Natural killer cell (primary cell): ENCODE measurements at regions of chr7 and their contacts with region 1.

Region 1: DNA sequence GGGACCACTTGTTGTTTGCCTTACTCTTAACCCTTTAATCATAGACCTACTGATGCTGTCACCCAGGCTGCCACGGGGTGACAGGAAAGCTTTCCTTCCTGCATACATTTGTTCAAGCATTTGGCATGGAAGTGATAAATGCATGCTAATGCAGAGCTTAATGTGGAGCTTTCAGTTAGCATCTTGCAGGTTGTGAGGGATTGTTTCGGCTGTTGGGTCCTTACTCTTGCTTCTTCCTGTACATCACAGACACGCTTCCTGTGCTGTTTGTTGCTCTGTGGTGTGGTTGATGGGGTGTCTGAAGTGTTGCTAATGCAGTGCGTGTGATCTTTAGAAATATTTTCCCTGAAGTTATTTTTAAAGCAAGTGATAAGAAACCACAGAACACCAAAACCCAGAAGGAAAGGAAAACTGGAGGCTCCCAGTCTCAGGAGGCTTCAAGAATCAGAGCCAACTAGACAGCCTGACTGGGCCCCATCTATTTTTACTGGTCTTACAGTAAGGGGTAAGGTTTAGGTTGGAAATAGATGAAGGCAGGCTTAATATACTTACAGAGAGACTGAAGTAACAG is 143.1 kb downstream of the CHN2 start:
- DNase-seq: peak; percentile 40 to 78
- ATAC-seq: peak; percentile 86 to 98 (median 92)
- H3K4me3 ChIP-seq: no peak overlapping the region
- H3K4me3 Mint-ChIP-seq: peak overlapping the region; percentile 72
- H3K27ac ChIP-seq: peak overlapping the region; percentile 46
- H3K27ac Mint-ChIP-seq: peak overlapping the region; percentile 83 to 86
- H3K4me1 ChIP-seq: peaks cover 43% of the 10 kb centered on the region
- H3K4me1 Mint-ChIP-seq: peaks cover 44% of the 10 kb centered on the region in 2 donors
- H3K27me3 ChIP-seq: no peaks in the 10 kb centered on the region
- H3K27me3 Mint-ChIP-seq: no peaks in the 10 kb centered on the region
- CTCF ChIP-seq: no peak

Region 2: DNA sequence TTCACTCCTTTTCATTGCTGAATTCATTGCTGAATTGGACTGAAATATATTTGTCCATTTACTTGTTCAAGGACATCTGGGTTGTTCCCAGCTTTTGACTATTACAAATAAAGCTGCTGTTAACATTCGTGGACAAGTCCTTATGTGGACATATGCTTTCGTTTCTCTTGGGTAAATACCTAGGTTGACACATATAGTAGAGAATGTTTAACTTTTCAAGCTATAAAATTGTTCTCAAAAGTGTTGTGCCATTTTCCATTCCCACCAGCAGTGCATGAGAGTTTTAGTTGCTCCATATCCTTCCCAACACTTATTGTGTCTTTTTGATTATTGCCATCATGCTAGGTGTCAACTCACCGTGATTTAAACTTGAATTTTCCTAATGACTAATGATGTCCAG is 173.8 kb before region 1 on chr7:
- intact Hi-C with region 1: no loop called
- DNase-seq: no peak
- ATAC-seq: no peak
- H3K4me3 ChIP-seq: no peak overlapping the region
- H3K4me3 Mint-ChIP-seq: no peak overlapping the region
- H3K27ac ChIP-seq: no peak overlapping the region
- H3K27ac Mint-ChIP-seq: no peak overlapping the region
- H3K4me1 ChIP-seq: no peaks in the 10 kb centered on the region
- H3K4me1 Mint-ChIP-seq: no peaks in the 10 kb centered on the region
- H3K27me3 ChIP-seq: peaks cover 2% of the 10 kb centered on the region
- H3K27me3 Mint-ChIP-seq: peaks cover 22 to 29% of the 10 kb centered on the region in 2 donors
- CTCF ChIP-seq: no peak

Region 3: GRCh38 chr7:29194594-29195427 is 142.8 kb before region 1 on chr7 and contains the start of gene CHN2:
- intact Hi-C with region 1: loop called (anchors 1 kb)
- DNase-seq: peak; percentile 68 to 75
- ATAC-seq: peak; percentile 61 to 79 (median 66)
- H3K4me3 ChIP-seq: peak within 1 kb of the TSS; percentile 79
- H3K4me3 Mint-ChIP-seq: peak within 1 kb of the TSS; percentile 93
- H3K27ac ChIP-seq: peak within 1 kb of the TSS; percentile 67
- H3K27ac Mint-ChIP-seq: peak within 1 kb of the TSS; percentile 88 to 92
- H3K4me1 ChIP-seq: peaks cover 19% of the 10 kb centered on the region
- H3K4me1 Mint-ChIP-seq: peaks cover 35 to 46% of the 10 kb centered on the region in 2 donors
- H3K27me3 ChIP-seq: no peaks in the 10 kb centered on the region
- H3K27me3 Mint-ChIP-seq: peaks cover 2 to 7% of the 10 kb centered on the region in 2 donors
- CTCF ChIP-seq: no peak
- total RNA-seq, gene CHN2: 23.2 to 40.6 (median 30.2) TPM

Region 4: GRCh38 chr7:29239638-29240037 is 98.0 kb before region 1 on chr7:
- intact Hi-C with region 1: loop called (anchors 5 kb)
- DNase-seq: peak in 1 of 2 donors; percentile 44
- ATAC-seq: no peak
- H3K4me3 ChIP-seq: no peak overlapping the region
- H3K4me3 Mint-ChIP-seq: no peak overlapping the region
- H3K27ac ChIP-seq: no peak overlapping the region
- H3K27ac Mint-ChIP-seq: no peak overlapping the region
- H3K4me1 ChIP-seq: peaks cover 7% of the 10 kb centered on the region
- H3K4me1 Mint-ChIP-seq: peaks cover 27 to 31% of the 10 kb centered on the region in 2 donors
- H3K27me3 ChIP-seq: no peaks in the 10 kb centered on the region
- H3K27me3 Mint-ChIP-seq: no peaks in the 10 kb centered on the region
- CTCF ChIP-seq: peak; percentile 32

Region 5: GRCh38 chr7:29262191-29262917 is 75.3 kb before region 1 on chr7:
- intact Hi-C with region 1: loop called (anchors 2 kb)
- DNase-seq: no peak
- ATAC-seq: peak; percentile 75 to 84 (median 84)
- H3K4me3 ChIP-seq: no peak overlapping the region
- H3K4me3 Mint-ChIP-seq: peak overlapping the region; percentile 52
- H3K27ac ChIP-seq: no peak overlapping the region
- H3K27ac Mint-ChIP-seq: peak overlapping the region; percentile 63 to 68
- H3K4me1 ChIP-seq: peaks cover 13% of the 10 kb centered on the region
- H3K4me1 Mint-ChIP-seq: peaks cover 37 to 39% of the 10 kb centered on the region in 2 donors
- H3K27me3 ChIP-seq: no peaks in the 10 kb centered on the region
- H3K27me3 Mint-ChIP-seq: no peaks in the 10 kb centered on the region
- CTCF ChIP-seq: no peak

Region 6: DNA sequence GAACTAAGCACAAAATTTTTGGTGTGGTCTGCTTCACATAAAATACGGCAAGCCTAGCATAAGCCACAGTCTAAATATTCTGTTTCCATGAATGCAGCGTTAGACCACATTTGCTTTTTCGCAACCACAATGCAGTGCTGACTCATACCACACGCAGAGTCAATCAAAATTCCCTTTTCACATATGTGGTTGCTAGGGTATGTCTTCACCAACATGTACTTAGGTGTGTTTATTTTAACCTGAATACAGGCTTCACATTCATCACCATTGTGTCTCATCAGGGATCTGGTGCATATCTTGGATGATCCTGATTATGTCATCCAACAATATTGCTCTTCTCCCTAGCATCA is 52.2 kb before region 1 on chr7:
- intact Hi-C with region 1: loop called (anchors 1 kb)
- DNase-seq: peak; percentile 40 to 73
- ATAC-seq: peak; percentile 81 to 95 (median 81)
- H3K4me3 ChIP-seq: no peak overlapping the region
- H3K4me3 Mint-ChIP-seq: peak overlapping the region; percentile 82
- H3K27ac ChIP-seq: no peak overlapping the region
- H3K27ac Mint-ChIP-seq: peak overlapping the region; percentile 78 to 85
- H3K4me1 ChIP-seq: peaks cover 26% of the 10 kb centered on the region
- H3K4me1 Mint-ChIP-seq: peaks cover 42 to 47% of the 10 kb centered on the region in 2 donors
- H3K27me3 ChIP-seq: no peaks in the 10 kb centered on the region
- H3K27me3 Mint-ChIP-seq: peaks cover 12 to 30% of the 10 kb centered on the region in 2 donors
- CTCF ChIP-seq: no peak

Region 7: GRCh38 chr7:29319719-29320521 is 17.7 kb before region 1 on chr7:
- intact Hi-C with region 1: loop called (anchors 1 kb)
- DNase-seq: no peak
- ATAC-seq: peak; percentile 49 to 85 (median 72)
- H3K4me3 ChIP-seq: no peak overlapping the region
- H3K4me3 Mint-ChIP-seq: peak overlapping the region; percentile 64
- H3K27ac ChIP-seq: no peak overlapping the region
- H3K27ac Mint-ChIP-seq: peak overlapping the region in 1 of 2 donors; percentile 57
- H3K4me1 ChIP-seq: peaks cover 14% of the 10 kb centered on the region
- H3K4me1 Mint-ChIP-seq: peaks cover 29% of the 10 kb centered on the region in 2 donors
- H3K27me3 ChIP-seq: no peaks in the 10 kb centered on the region
- H3K27me3 Mint-ChIP-seq: no peaks in the 10 kb centered on the region
- CTCF ChIP-seq: no peak

Region 8: DNA sequence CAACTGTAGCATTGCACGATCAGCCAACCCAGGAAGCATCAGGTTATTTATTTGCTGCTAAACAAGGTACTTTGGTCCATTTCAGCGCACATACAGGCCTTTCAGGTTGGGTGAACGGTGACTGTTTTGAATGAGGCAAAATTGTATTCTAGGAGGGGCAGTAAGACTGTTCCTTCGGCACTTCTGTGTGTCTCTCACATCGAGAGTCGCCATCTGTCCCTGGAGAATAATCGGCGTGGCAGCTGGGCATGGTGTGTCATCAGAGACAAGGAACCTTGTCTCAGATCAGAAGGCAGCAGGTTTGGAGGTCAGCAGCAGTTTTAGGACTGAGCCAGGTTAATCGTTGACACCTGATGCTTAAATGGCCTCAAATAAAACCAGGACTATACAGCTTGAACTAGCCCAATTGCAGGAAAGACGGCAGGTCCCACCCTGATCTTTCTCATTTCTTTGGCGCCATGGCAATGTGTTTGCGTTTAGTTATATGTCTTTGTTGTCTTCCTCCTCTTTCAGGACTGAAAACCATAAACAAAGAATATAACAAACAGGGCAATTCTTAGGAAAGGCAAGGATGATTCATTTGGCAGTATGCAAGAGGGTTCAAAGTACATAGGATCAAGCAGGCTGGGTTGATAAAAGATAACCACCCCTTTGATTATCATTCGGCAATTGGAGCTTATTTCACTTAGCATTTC is 134.0 kb after region 1 on chr7:
- intact Hi-C with region 1: no loop called
- DNase-seq: no peak
- ATAC-seq: no peak
- H3K4me3 ChIP-seq: no peak overlapping the region
- H3K4me3 Mint-ChIP-seq: no peak overlapping the region
- H3K27ac ChIP-seq: no peak overlapping the region
- H3K27ac Mint-ChIP-seq: no peak overlapping the region
- H3K4me1 ChIP-seq: no peaks in the 10 kb centered on the region
- H3K4me1 Mint-ChIP-seq: no peaks in the 10 kb centered on the region
- H3K27me3 ChIP-seq: no peaks in the 10 kb centered on the region
- H3K27me3 Mint-ChIP-seq: no peaks in the 10 kb centered on the region
- CTCF ChIP-seq: no peak